AG04449 (cell line): ENCODE measurements at regions of chr13 and their contacts with region 1.

Region 1: DNA sequence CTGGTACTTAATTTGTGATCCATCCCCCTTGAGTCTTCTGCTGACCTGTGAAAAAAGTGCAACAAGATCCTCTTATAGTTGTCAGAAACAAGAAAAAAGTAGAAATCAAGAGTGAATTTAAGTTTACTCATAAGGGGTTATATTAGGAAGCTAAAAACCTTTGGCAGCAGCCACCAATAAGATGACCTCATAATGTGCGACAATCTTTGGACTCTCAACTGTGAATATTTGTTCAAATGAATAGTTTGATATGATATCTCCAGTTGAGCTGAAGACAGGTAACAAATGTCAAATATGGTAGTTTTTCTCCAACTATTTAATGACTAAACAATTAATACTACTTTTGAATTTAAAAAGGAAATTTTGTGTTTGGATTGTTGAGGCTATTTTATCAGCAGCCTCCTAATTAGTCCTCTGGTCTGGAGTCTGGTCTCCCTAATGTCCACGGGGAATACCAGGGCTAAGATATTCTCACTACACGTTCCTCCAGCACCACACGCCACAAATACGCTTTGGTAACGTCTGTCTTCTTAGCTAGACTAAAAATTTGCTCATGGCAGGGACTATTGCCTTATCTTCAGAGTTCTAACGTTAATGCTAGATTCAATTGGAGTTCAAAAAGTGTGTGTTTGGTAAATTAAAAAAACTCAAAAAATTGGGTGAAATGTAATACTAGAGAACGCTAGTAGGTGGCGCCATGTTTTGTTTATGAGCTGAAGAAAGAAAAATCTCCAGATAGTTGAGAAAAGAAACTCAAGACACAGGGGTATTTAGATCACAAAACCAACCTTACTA is 51.0 kb upstream of the PDX1 start:
- DNase-seq: no peak
- H3K4me3 ChIP-seq: no peak overlapping the region
- CTCF ChIP-seq: peak; percentile 30

Region 2: DNA sequence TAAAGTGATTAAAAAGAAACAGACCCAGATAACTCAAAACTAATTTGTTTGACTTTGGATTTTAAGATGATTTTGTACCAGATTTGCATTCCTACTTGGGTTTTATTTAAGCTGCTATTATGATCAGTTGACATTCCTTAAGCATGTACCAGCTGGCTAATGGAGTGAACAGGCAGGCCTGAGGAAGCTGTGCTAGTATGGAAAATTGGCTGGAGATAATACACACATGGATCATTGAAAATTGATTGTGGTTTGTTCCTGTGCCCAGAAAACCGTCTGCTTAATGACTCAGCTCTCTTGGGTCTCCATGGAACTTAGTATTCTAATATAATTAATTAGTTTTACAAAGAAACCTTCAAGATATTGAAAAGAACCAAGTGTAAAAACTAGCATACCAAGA is 224.5 kb before region 1 on chr13:
- CTCF ChIA-PET with region 1: no interaction called
- POLR2A ChIA-PET with region 1: no interaction called
- DNase-seq: peak; percentile 53
- H3K4me3 ChIP-seq: no peak overlapping the region
- CTCF ChIP-seq: no peak

Region 3: GRCh38 chr13:27997904-27998522 is 129.2 kb after region 1 on chr13:
- CTCF ChIA-PET with region 1: interaction called, 10 read pairs
- POLR2A ChIA-PET with region 1: no interaction called
- DNase-seq: no peak
- H3K4me3 ChIP-seq: no peak overlapping the region
- CTCF ChIP-seq: peak; percentile 43

Region 4: GRCh38 chr13:28110414-28110813 is 241.6 kb after region 1 on chr13:
- CTCF ChIA-PET with region 1: no interaction called
- POLR2A ChIA-PET with region 1: no interaction called
- DNase-seq: no peak
- H3K4me3 ChIP-seq: no peak overlapping the region
- CTCF ChIP-seq: no peak